ENCODE measurements at regions of chr3 and their contacts with region 1.

Region 1: GRCh38 chr3:40524568-40525285 is at the start of gene ZNF621:
- DNase-seq: peak; percentile 89
- ATAC-seq: peak; percentile 98
- H3K4me3 ChIP-seq: peak within 1 kb of the TSS; percentile 91
- H3K27ac ChIP-seq: peak within 1 kb of the TSS; percentile 75
- H3K4me1 ChIP-seq: peaks cover 20% of the 10 kb centered on the region
- H3K27me3 ChIP-seq: no peaks in the 10 kb centered on the region
- CTCF ChIP-seq: 0 out of 2 replicates have a peak, but pooled peaks have one; percentile 15
- total RNA-seq, gene ZNF621: 17.0 and 21.9 TPM in 2 replicates

Region 2: GRCh38 chr3:40309418-40309924 is 215.3 kb before region 1 on chr3 and contains the start of gene EIF1B:
- CTCF ChIA-PET with region 1: no interaction called
- POLR2A ChIA-PET with region 1: no interaction called
- intact Hi-C with region 1: loop called (anchors 1 kb)
- DNase-seq: peak; percentile 98
- ATAC-seq: peak; percentile 92
- H3K4me3 ChIP-seq: peak within 1 kb of the TSS; percentile 93
- H3K27ac ChIP-seq: peak within 1 kb of the TSS; percentile 25; the same call in 1 of the 2 replicates
- H3K4me1 ChIP-seq: peaks cover 14% of the 10 kb centered on the region; the same call in 1 of the 2 replicates
- H3K27me3 ChIP-seq: no peaks in the 10 kb centered on the region
- CTCF ChIP-seq: peak; percentile 87
- total RNA-seq, gene EIF1B: 9.0 and 10.0 TPM in 2 replicates

Region 3: GRCh38 chr3:40476478-40477470 is 48.0 kb before region 1 on chr3 and contains the start of gene ZNF619:
- CTCF ChIA-PET with region 1: no interaction called
- POLR2A ChIA-PET with region 1: no interaction called
- intact Hi-C with region 1: loop called (anchors 1 kb)
- DNase-seq: peak; percentile 75
- ATAC-seq: peak; percentile 90
- H3K4me3 ChIP-seq: peak within 1 kb of the TSS; percentile 82
- H3K27ac ChIP-seq: no peak within 1 kb of the TSS; the same call in 1 of the 2 replicates
- H3K4me1 ChIP-seq: peaks cover 5% of the 10 kb centered on the region; the same call in 1 of the 2 replicates
- H3K27me3 ChIP-seq: no peaks in the 10 kb centered on the region
- CTCF ChIP-seq: no peak
- total RNA-seq, gene ZNF619: 3.5 and 6.0 TPM in 2 replicates

Region 4: GRCh38 chr3:40505599-40506462 is 18.9 kb before region 1 on chr3 and contains the start of gene ZNF620:
- CTCF ChIA-PET with region 1: no interaction called
- POLR2A ChIA-PET with region 1: no interaction called
- intact Hi-C with region 1: loop called (anchors 2 kb)
- DNase-seq: peak; percentile 69
- ATAC-seq: peak; percentile 62
- H3K4me3 ChIP-seq: peak within 1 kb of the TSS; percentile 72
- H3K27ac ChIP-seq: peak within 1 kb of the TSS; percentile 63
- H3K4me1 ChIP-seq: peaks cover 24% of the 10 kb centered on the region
- H3K27me3 ChIP-seq: no peaks in the 10 kb centered on the region
- CTCF ChIP-seq: peak; percentile 55
- total RNA-seq, gene ZNF620: 1.8 and 2.5 TPM in 2 replicates

Measured in PC-3 (cell line).